ENCODE measurements at regions of chr6 and their contacts with region 1.

Region 1: DNA sequence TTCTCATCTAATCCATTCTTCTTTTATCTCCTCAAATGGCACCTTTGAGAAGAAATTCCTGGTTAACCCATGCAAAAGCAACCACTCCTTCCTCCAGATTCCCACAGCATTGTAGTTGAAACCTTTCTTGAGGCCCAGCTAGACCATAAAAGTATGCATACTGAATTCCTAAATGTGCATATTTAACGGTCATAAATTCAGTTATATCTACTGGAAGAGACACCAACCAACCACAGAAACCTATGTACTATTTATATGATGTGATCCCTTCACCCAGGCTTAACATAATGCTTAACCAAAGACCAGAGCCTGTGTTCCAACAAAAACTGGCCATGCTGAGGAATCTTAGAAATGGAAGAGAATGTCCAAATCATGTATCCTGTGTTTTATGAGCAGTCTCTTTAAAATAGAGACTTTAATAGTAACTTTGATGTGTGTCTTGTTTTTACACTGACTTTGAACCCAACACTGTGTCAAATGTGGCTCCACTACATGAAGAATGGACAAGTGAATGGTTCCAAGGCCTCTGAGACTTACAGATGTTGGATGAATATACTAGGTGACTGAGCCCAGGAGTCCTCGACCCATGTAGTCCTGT is 11.4 kb upstream of the TAF8 start:
- DNase-seq: no peak
- H3K4me3 Mint-ChIP-seq: peak overlapping the region; percentile 83
- H3K27ac Mint-ChIP-seq: peak overlapping the region; percentile 97
- H3K4me1 Mint-ChIP-seq: peaks cover 69% of the 10 kb centered on the region
- H3K27me3 Mint-ChIP-seq: no peaks in the 10 kb centered on the region

Region 2: DNA sequence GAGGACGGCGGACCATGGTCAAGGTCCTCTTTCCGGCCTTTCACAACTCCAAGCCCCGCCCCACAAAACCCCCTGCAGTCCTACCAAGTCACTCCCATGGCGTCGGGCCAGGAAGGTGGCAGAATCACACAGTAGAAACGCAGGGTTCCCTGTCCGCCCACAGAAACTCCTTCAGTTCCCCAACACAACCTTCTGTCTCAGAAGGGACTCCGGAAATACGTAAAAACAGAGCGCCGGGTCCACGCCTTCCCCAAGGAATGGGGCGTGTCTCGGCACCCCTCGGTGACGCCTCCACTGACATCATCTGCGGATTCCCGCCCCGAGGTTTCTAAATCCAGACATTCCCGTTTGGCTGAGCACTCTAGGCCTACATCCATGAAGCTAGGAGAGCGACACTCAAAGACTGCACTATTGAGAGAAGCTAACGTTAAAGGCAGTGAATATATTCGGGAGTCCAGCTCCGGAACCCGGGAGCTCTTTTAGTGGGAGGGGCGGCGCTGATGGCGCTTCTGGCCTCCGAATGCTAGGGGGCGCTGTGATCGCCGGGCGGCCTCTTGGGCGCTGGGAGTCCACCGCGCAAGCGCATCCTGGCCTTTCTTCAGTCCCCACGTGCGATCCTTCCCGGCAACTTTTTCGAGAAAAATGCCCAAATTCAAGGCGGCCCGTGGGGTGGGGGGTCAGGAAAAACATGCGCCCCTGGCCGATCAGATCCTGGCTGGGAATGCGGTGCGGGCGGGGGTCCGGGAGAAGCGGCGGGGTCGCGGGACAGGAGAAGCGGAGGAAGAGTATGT is 117.8 kb before region 1 on chr6 and contains the starts of genes BYSL and MED20:
- CTCF ChIA-PET with region 1: interaction called, 114 read pairs
- intact Hi-C with region 1: loop called (anchors 1 kb)
- DNase-seq: peak; percentile 97
- H3K4me3 Mint-ChIP-seq: peak within 1 kb of the TSS; percentile 91
- H3K27ac Mint-ChIP-seq: peak within 1 kb of the TSS; percentile 97
- H3K4me1 Mint-ChIP-seq: peaks cover 54% of the 10 kb centered on the region
- H3K27me3 Mint-ChIP-seq: no peaks in the 10 kb centered on the region
- total RNA-seq, gene BYSL: 49.8 TPM
- total RNA-seq, gene MED20: 24.0 to 27.4 TPM

Region 3: GRCh38 chr6:41941280-41942066 is 97.4 kb before region 1 on chr6 and contains the start of gene CCND3:
- CTCF ChIA-PET with region 1: interaction called, 296 read pairs
- intact Hi-C with region 1: loop called (anchors 1 kb)
- DNase-seq: peak; percentile 93
- H3K4me3 Mint-ChIP-seq: peak within 1 kb of the TSS; percentile 100
- H3K27ac Mint-ChIP-seq: peak within 1 kb of the TSS; percentile 99
- H3K4me1 Mint-ChIP-seq: peaks cover 47% of the 10 kb centered on the region
- H3K27me3 Mint-ChIP-seq: no peaks in the 10 kb centered on the region
- total RNA-seq, gene CCND3: 1,152 to 1,165 TPM

Region 4: GRCh38 chr6:41976794-41977484 is 62.0 kb before region 1 on chr6:
- CTCF ChIA-PET with region 1: interaction called, 9 read pairs
- intact Hi-C with region 1: loop called (anchors 1 kb)
- DNase-seq: peak; percentile 81
- H3K4me3 Mint-ChIP-seq: peak overlapping the region; percentile 78
- H3K27ac Mint-ChIP-seq: peak overlapping the region; percentile 100
- H3K4me1 Mint-ChIP-seq: peaks cover 80% of the 10 kb centered on the region
- H3K27me3 Mint-ChIP-seq: no peaks in the 10 kb centered on the region

Region 5: DNA sequence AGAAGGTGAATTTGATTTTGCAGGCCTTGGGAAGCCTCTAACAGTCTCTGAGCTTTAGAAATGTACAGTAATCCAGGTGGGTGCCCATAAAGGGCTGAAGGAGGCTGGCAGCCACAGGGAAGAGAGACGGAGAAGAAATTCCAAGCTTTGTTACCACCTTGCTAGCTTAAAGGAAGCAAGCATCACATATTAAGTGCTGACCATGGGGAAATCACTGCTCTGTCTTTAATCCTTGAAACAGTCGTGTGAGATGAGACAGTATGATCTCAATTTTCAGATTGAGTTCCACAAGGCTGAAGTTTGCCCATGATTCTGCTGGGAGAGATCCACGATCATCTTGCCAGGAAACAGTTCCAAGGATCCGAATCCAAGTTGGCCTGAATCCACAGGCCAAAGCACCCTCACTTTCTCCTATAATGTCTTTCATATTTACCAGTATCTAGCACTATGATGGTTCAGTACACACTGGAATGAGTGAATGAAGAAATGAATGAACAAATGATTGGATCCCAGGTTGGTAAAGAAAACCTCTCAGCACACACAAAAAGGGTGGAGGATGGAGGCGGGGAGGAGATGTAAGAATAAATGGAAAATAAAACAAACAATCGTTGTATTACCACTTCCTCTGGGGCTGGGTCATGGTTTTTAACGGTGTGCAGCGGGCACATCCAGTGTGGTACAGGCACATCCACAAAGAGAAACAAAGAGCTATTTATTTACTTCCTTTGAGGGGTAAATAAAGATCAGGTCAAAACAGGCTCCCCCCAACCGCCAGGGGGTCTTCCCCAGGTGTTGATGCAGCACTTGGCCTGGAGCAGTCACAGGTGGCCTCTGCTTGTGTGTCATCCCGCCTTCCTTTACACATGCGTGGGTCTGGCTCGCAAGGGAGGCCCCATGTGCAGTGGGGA is 16.8 kb before region 1 on chr6:
- CTCF ChIA-PET with region 1: interaction called, 16 read pairs
- intact Hi-C with region 1: loop called (anchors 1 kb)
- DNase-seq: peak; percentile 91
- H3K4me3 Mint-ChIP-seq: peak overlapping the region; percentile 63
- H3K27ac Mint-ChIP-seq: peak overlapping the region; percentile 99
- H3K4me1 Mint-ChIP-seq: peaks cover 89% of the 10 kb centered on the region
- H3K27me3 Mint-ChIP-seq: no peaks in the 10 kb centered on the region

Region 6: GRCh38 chr6:42771741-42772100 is 732.8 kb after region 1 on chr6:
- CTCF ChIA-PET with region 1: no interaction called
- intact Hi-C with region 1: loop called (anchors 5 kb)
- DNase-seq: no peak
- H3K4me3 Mint-ChIP-seq: peak overlapping the region; percentile 71
- H3K27ac Mint-ChIP-seq: peak overlapping the region; percentile 96
- H3K4me1 Mint-ChIP-seq: peaks cover 62% of the 10 kb centered on the region
- H3K27me3 Mint-ChIP-seq: no peaks in the 10 kb centered on the region

Measured in activated naive CD4-positive, alpha-beta T cell treated with anti-CD3 and anti-CD28 coated beads for 36 hours (primary cell).